WTC11 (cell line): ENCODE measurements at regions of chr3 and their contacts with region 1.

Region 1: GRCh38 chr3:129249276-129250065 is at the start of gene COPG1:
- DNase-seq: peak; percentile 83
- ATAC-seq: peak; percentile 88
- H3K4me3 Mint-ChIP-seq: peak within 1 kb of the TSS; percentile 88
- H3K27ac Mint-ChIP-seq: peak within 1 kb of the TSS; percentile 79
- H3K4me1 Mint-ChIP-seq: peaks cover 15% of the 10 kb centered on the region
- H3K27me3 Mint-ChIP-seq: no peaks in the 10 kb centered on the region
- CTCF ChIP-seq: no peak
- total RNA-seq, gene COPG1: 121 to 132 TPM (median 129 TPM) in 3 replicates

Region 2: DNA sequence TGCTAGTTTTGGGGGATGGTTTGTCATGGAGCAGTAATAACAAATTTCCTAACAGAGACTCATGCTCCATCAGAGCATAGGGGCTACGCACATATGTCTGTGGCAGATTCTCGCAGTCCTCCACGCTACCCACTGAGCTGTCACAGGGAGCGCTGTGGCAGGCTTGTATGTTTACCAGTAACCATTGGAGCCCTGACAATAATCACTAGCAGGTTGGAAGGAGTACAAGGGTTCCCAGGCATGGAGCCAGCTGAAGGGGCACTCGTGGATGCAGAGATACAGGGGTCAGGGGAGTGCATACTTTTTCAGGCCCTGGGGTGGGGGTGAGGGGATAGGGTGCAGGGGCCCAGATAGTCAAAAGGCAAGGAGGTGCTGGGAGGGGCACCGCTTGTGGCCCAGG is 196.8 kb before region 1 on chr3:
- CTCF ChIA-PET with region 1: interaction called, 23 read pairs
- POLR2A ChIA-PET with region 1: no interaction called
- DNase-seq: no peak
- ATAC-seq: no peak
- H3K4me3 Mint-ChIP-seq: no peak overlapping the region
- H3K27ac Mint-ChIP-seq: no peak overlapping the region
- H3K4me1 Mint-ChIP-seq: 0 out of 2 replicates have a peak, but pooled peaks cover 3% of the 10 kb centered on the region
- H3K27me3 Mint-ChIP-seq: peaks cover 13% of the 10 kb centered on the region
- CTCF ChIP-seq: no peak

Region 3: GRCh38 chr3:129160891-129161859 is 88.3 kb before region 1 on chr3 and contains the start of gene ISY1:
- CTCF ChIA-PET with region 1: interaction called, 57 read pairs
- POLR2A ChIA-PET with region 1: interaction called, 11 read pairs
- DNase-seq: peak; percentile 86
- ATAC-seq: peak; percentile 72
- H3K4me3 Mint-ChIP-seq: peak within 1 kb of the TSS; percentile 98
- H3K27ac Mint-ChIP-seq: peak within 1 kb of the TSS; percentile 100
- H3K4me1 Mint-ChIP-seq: peaks cover 13% of the 10 kb centered on the region
- H3K27me3 Mint-ChIP-seq: no peaks in the 10 kb centered on the region
- CTCF ChIP-seq: peak; percentile 65
- total RNA-seq, gene ISY1: 21.4 to 25.0 TPM (median 21.5 TPM) in 3 replicates

Region 4: GRCh38 chr3:129224984-129225393 is 24.5 kb before region 1 on chr3:
- CTCF ChIA-PET with region 1: interaction called, 16 read pairs
- POLR2A ChIA-PET with region 1: no interaction called
- DNase-seq: no peak
- ATAC-seq: no peak
- H3K4me3 Mint-ChIP-seq: no peak overlapping the region
- H3K27ac Mint-ChIP-seq: no peak overlapping the region
- H3K4me1 Mint-ChIP-seq: peaks cover 24% of the 10 kb centered on the region
- H3K27me3 Mint-ChIP-seq: no peaks in the 10 kb centered on the region; the same call in 1 of the 2 replicates
- CTCF ChIP-seq: no peak

Region 5: DNA sequence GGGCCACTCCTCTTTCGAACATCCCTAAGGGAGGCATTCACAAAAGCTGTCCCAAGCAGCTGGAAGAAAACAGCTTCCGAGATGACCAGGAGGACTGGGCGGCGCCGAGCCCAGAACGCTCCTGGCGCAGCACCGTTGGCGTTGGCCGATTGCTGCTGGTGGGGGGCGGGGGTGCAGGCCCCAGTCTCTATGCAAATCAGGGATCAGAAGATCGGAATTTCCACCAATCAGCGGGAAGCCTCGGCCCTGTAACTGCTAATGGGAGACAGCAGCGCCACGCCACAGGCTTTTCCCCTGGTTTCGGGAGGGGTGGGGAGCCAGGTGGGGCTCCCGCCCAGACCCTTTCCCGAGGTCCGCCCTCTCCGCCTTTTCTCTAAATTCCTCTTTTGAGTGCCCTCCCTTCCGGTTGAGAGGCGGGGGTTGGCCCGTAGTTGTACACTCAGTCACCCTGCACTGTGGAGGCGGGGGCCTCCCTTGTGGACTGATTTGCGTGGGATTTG is 56.2 kb after region 1 on chr3:
- CTCF ChIA-PET with region 1: no interaction called
- POLR2A ChIA-PET with region 1: no interaction called
- DNase-seq: peak; percentile 99
- ATAC-seq: peak; percentile 96
- H3K4me3 Mint-ChIP-seq: peak overlapping the region; percentile 65
- H3K27ac Mint-ChIP-seq: peak overlapping the region; percentile 100
- H3K4me1 Mint-ChIP-seq: peaks cover 25% of the 10 kb centered on the region
- H3K27me3 Mint-ChIP-seq: no peaks in the 10 kb centered on the region
- CTCF ChIP-seq: no peak

Region 6: DNA sequence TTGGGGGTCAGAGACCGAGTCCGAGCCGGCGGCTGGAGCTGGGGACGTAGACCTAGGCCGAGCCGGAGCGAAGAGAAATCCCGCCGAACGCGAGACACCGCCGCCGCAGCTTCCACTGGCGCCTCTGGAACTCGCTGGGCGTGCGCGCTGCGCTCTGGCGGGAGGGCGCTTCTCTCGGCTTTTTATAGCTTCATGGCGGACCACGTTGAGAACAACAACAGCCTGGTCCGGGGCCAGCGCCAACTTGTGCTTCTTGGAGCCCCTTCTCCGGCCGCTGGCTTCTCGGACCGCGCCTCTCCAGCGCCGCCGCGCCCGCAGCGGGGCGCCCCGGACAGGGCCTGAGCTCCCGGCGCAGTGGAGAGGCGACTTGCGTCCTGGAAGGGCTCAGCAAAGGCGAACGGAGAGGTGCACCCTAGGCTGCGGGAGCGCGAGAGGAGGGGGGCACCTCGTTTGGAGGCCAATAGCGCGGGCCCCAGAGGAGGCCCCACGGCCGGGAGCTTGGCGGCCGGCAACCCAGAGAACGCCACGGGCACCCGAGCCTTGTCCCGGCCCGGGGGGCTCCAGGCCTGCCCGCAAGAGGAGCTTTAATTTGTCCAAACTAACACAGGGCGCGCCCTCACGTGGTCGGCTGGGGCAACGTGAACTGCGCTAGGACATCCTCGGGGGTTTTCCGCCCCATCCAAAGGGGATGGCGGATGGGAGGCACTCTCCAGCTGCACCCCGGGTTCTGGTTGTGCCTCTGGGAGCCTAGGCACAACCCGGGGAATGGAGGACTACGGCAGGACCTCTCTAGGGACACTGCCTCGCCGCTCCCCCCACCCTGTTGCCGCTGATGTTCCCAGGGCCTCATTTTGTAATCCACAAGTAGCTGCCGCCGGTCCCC is 66.9 kb after region 1 on chr3:
- CTCF ChIA-PET with region 1: interaction called, 5 read pairs
- POLR2A ChIA-PET with region 1: interaction called, 12 read pairs
- DNase-seq: peak; percentile 82
- ATAC-seq: peak; percentile 45
- H3K4me3 Mint-ChIP-seq: peak overlapping the region; percentile 65
- H3K27ac Mint-ChIP-seq: no peak overlapping the region
- H3K4me1 Mint-ChIP-seq: peaks cover 7% of the 10 kb centered on the region
- H3K27me3 Mint-ChIP-seq: no peaks in the 10 kb centered on the region; the same call in 1 of the 2 replicates
- CTCF ChIP-seq: peak; percentile 13; the same call in 1 of the 2 replicates